Activated CD4-positive, alpha-beta memory T cell treated with anti-CD3 and anti-CD28 coated beads for 36 hours (primary cell): ENCODE measurements at regions of chr4 and their contacts with region 1.

Region 1: DNA sequence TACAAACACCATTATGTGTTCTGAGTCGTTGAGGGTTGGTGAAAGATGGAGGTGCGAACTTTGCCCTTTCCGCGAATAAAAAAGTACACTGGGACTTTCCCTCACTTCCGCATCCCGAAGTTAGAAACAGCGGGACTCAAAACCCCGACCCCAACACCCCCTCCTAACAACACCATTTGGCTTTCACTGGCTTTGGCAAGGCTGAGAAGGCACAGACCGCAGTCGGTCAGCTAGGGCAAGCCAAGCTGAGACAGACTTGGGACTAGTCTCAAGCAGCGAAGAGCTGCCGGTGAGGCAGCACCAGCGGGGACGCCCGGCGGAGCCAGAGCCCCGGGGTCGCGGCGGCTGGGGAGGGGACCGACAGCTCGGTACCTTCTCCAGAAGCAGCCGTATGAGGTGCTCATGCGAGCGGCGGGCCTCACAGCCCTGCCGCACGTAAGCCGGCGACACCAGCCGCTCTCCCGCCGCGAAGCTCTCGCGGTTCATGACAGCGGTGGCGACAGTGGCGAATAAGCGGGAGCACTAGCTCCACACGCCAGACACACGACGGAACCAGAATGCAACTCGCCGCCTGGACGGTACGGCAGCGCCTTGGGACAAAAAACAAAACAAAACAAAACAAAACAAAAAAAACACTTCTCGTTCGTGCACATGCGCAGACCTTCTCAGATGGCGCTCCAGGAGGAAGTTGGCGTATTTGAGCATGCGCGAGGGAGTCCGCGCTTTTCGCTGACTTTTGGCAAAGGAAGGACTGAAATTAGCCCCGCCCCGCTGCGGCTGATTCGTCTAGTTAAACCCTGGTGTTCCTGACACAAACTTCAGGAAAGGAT is at the start of gene SEPSECS:
- DNase-seq: peak; percentile 96
- H3K4me3 Mint-ChIP-seq: peak within 1 kb of the TSS; percentile 90
- H3K27ac Mint-ChIP-seq: peak within 1 kb of the TSS; percentile 99
- H3K4me1 Mint-ChIP-seq: peaks cover 39% of the 10 kb centered on the region
- H3K27me3 Mint-ChIP-seq: peaks cover 1% of the 10 kb centered on the region
- total RNA-seq, gene SEPSECS: 12.8 to 13.3 TPM

Region 2: GRCh38 chr4:24584175-24584850 is 575.8 kb before region 1 on chr4 and contains the start of gene DHX15:
- CTCF ChIA-PET with region 1: no interaction called
- POLR2A ChIA-PET with region 1: interaction called, 7 read pairs
- intact Hi-C with region 1: loop called (anchors 1 kb)
- DNase-seq: peak; percentile 95
- H3K4me3 Mint-ChIP-seq: peak within 1 kb of the TSS; percentile 94
- H3K27ac Mint-ChIP-seq: peak within 1 kb of the TSS; percentile 95
- H3K4me1 Mint-ChIP-seq: peaks cover 32% of the 10 kb centered on the region
- H3K27me3 Mint-ChIP-seq: peaks cover 3% of the 10 kb centered on the region
- total RNA-seq, gene DHX15: 169 to 172 TPM

Region 3: DNA sequence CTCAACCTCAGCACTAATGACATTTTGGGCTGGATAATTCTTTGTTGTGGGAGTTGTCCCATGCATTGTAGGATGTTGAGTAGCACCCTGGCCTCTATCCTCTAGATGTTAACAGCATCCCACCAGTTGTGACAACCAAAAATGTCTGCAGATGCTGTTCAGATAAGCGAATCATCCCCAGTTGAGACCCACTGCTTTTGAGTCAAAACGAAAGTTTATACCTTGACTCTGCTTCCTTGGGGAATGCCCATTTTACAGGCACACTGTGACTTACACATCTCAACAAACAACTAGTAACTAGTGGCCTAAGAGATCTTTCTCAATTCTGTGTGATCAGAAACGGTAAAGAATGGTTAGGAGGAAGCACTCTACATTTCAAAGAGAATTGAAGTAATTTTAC is 36.9 kb before region 1 on chr4:
- CTCF ChIA-PET with region 1: no interaction called
- POLR2A ChIA-PET with region 1: no interaction called
- intact Hi-C with region 1: loop called (anchors 2 kb)
- DNase-seq: peak; percentile 22
- H3K4me3 Mint-ChIP-seq: no peak overlapping the region
- H3K27ac Mint-ChIP-seq: no peak overlapping the region
- H3K4me1 Mint-ChIP-seq: peaks cover 11% of the 10 kb centered on the region
- H3K27me3 Mint-ChIP-seq: no peaks in the 10 kb centered on the region

Region 4: DNA sequence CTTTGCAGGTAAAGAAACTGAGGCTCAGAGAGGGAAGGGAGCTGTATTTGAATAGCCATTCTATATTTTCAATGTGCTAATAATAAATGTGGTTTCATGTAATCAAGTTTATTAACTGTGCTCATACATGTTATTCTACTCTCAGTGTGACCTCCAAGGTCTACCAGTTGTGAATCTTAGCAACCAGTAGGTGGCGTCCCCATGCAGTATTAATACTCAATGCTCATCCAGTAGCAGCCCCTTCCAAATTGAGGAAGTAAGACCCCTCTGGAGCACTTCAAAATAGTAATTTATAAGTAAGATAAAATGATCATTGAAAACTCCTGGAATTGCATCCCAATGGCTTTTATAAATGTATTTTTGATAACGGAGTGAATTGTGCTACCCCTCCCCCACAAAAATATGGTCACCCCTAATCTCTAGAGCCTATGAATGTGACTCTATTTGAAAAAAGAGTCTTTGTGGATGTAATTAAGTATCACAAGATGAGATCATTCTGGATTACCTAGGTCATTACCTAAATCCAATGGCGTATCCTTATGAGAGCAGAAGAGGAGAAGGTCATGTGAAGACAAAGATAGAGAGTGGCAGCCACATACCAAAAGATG is 20.5 kb after region 1 on chr4:
- CTCF ChIA-PET with region 1: interaction called, 13 read pairs
- POLR2A ChIA-PET with region 1: no interaction called
- intact Hi-C with region 1: loop called (anchors 1 kb)
- DNase-seq: peak; percentile 43
- H3K4me3 Mint-ChIP-seq: no peak overlapping the region
- H3K27ac Mint-ChIP-seq: no peak overlapping the region
- H3K4me1 Mint-ChIP-seq: peaks cover 26% of the 10 kb centered on the region
- H3K27me3 Mint-ChIP-seq: no peaks in the 10 kb centered on the region

Region 5: GRCh38 chr4:25320773-25321172 is 160.7 kb after region 1 on chr4:
- CTCF ChIA-PET with region 1: no interaction called
- POLR2A ChIA-PET with region 1: no interaction called
- intact Hi-C with region 1: loop called (anchors 2 kb)
- DNase-seq: no peak
- H3K4me3 Mint-ChIP-seq: no peak overlapping the region
- H3K27ac Mint-ChIP-seq: peak overlapping the region; percentile 79
- H3K4me1 Mint-ChIP-seq: peaks cover 25% of the 10 kb centered on the region
- H3K27me3 Mint-ChIP-seq: no peaks in the 10 kb centered on the region

Region 6: DNA sequence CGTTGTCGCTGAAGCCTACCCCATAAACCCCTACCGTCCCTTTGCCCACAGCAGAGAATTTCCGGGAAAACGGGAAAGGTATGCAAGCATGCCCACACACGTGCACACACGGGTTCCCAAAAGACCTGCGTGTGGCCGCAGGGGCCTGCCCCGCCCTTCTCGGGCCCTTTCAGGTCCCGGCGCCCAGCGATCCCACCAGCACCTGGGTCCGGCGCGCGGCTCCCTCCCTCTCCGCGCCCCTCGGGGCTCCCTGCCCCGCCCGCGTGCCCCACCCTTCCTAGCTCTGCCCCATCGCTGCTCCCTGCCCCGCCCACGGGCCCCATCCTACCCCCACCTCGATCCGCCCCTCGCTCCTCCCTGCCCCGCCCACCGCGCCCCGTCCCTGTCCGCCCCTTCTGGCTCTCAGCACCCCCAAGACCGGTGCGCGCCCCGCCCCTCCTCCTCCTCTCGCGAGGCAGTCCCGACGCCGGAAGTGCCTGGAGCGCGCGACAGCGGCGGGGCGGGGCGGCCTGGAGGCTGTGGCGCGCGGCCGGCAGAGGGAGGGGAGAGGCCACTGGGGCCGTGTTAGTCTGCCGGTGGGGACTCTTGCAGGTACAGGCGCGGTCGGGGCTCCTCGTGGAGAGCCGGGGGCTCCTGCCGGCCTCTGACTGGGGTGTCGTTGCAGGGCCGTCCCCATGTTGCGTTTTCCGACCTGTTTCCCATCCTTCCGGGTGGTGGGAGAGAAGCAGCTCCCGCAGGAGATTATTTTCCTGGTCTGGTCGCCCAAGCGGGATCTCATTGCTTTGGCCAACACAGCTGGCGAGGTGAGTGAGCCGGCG is 216.9 kb after region 1 on chr4 and contains the start of gene ANAPC4:
- CTCF ChIA-PET with region 1: no interaction called
- POLR2A ChIA-PET with region 1: interaction called, 9 read pairs
- intact Hi-C with region 1: loop called (anchors 1 kb)
- DNase-seq: peak; percentile 98
- H3K4me3 Mint-ChIP-seq: no peak within 1 kb of the TSS
- H3K27ac Mint-ChIP-seq: peak within 1 kb of the TSS; percentile 72
- H3K4me1 Mint-ChIP-seq: peaks cover 6% of the 10 kb centered on the region
- H3K27me3 Mint-ChIP-seq: no peaks in the 10 kb centered on the region
- total RNA-seq, gene ANAPC4: 26.1 to 31.5 TPM

Region 7: GRCh38 chr4:25421816-25422525 is 261.9 kb after region 1 on chr4:
- CTCF ChIA-PET with region 1: no interaction called
- POLR2A ChIA-PET with region 1: no interaction called
- intact Hi-C with region 1: no loop called
- DNase-seq: no peak
- H3K4me3 Mint-ChIP-seq: no peak overlapping the region
- H3K27ac Mint-ChIP-seq: peak overlapping the region; percentile 23
- H3K4me1 Mint-ChIP-seq: peaks cover 4% of the 10 kb centered on the region
- H3K27me3 Mint-ChIP-seq: no peaks in the 10 kb centered on the region